ENCODE measurements at regions of chr9 and their contacts with region 1.

Region 1: DNA sequence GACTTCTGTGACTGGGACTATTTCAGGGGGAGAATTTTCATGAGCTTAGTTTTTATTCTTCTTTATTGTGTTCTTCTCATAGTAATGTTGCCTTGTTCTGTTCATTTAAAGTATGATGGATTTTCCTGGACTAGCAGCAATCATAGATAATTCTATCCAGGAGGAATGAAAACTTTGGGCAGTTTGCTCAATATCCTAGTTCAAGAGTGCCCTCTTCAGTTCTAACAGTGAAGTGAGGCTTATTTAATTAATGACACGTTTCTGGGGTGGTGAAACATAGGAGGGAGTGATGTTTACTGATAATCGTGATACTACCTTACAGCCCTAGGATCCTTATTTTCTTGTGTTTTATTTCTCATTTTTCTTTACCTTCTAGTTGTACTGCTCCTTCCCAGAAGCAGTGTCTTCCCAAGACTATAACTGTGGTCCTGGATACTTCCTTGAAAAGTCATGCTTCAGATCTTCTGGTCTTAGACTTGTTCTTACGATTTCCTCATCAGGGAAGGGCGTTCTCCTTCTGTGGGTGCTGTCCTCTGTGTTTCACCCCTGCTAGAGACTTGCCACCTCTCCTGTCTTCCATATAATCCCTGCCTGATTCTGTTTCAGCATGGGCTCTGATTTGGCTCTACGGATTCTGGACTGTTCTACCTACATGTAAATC is 57.4 kb downstream of the CFAP95 start:
- DNase-seq: no peak

Region 2: GRCh38 chr9:69745716-69746437 is 132.1 kb before region 1 on chr9:
- intact Hi-C with region 1: loop called (anchors 5 kb)
- DNase-seq: no peak